ENCODE measurements at regions of chr12 and their contacts with region 1.

Region 1: DNA sequence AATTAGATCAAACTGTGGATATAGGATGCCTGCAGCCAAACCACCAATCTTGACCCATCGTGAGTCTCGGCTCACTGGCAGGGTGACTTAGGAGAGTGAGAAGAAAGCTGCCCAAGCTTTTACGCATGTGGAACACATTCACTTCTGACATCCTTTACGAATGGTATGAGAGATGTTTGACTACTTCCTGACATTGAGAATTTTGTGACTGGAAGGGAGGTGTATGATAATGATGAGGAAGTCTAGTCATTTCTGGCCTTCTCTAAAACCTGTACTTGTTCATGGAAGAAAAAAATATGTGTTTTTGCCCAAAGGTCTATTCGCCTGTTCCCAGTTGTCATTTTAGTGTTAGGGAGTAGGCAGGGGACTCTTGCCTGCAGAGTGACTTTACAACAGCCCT is 227.2 kb upstream of the ATP2B1 start:
- DNase-seq: no peak
- ATAC-seq: no peak
- H3K4me3 ChIP-seq: no peak overlapping the region
- H3K4me3 Mint-ChIP-seq: no peak overlapping the region
- H3K27ac ChIP-seq: no peak overlapping the region
- H3K27ac Mint-ChIP-seq: peak overlapping the region in 1 of 9 donors; percentile 64
- H3K4me1 ChIP-seq: no peaks in the 10 kb centered on the region
- H3K4me1 Mint-ChIP-seq: peaks cover 0 to 13% (median 4%) of the 10 kb centered on the region in 7 donors
- H3K27me3 ChIP-seq: no peaks in the 10 kb centered on the region
- H3K27me3 Mint-ChIP-seq: no peaks in the 10 kb centered on the region

Region 2: GRCh38 chr12:88006351-88006750 is 1929.5 kb before region 1 on chr12:
- CTCF ChIA-PET with region 1: no interaction called
- POLR2A ChIA-PET with region 1: no interaction called
- intact Hi-C with region 1: no loop called
- DNase-seq: no peak
- ATAC-seq: no peak
- H3K4me3 ChIP-seq: no peak overlapping the region
- H3K4me3 Mint-ChIP-seq: no peak overlapping the region
- H3K27ac ChIP-seq: no peak overlapping the region
- H3K27ac Mint-ChIP-seq: no peak overlapping the region
- H3K4me1 ChIP-seq: no peaks in the 10 kb centered on the region
- H3K4me1 Mint-ChIP-seq: no peaks in the 10 kb centered on the region
- H3K27me3 ChIP-seq: peaks cover 0 to 3% of the 10 kb centered on the region in 2 donors
- H3K27me3 Mint-ChIP-seq: peaks cover 2 to 17% (median 15%) of the 10 kb centered on the region in 5 donors

Region 3: GRCh38 chr12:89893972-89894706 is 41.7 kb before region 1 on chr12:
- CTCF ChIA-PET with region 1: no interaction called
- POLR2A ChIA-PET with region 1: no interaction called
- intact Hi-C with region 1: loop called in 1 of 2 experiments (anchors 2 kb)
- DNase-seq: no peak
- ATAC-seq: no peak
- H3K4me3 ChIP-seq: no peak overlapping the region
- H3K4me3 Mint-ChIP-seq: no peak overlapping the region
- H3K27ac ChIP-seq: no peak overlapping the region
- H3K27ac Mint-ChIP-seq: peak overlapping the region in 3 of 9 donors; percentile 11 to 66 (median 32)
- H3K4me1 ChIP-seq: peaks cover 0 to 5% of the 10 kb centered on the region in 2 donors
- H3K4me1 Mint-ChIP-seq: peaks cover 3 to 38% (median 25%) of the 10 kb centered on the region in 7 donors
- H3K27me3 ChIP-seq: no peaks in the 10 kb centered on the region
- H3K27me3 Mint-ChIP-seq: no peaks in the 10 kb centered on the region

Region 4: DNA sequence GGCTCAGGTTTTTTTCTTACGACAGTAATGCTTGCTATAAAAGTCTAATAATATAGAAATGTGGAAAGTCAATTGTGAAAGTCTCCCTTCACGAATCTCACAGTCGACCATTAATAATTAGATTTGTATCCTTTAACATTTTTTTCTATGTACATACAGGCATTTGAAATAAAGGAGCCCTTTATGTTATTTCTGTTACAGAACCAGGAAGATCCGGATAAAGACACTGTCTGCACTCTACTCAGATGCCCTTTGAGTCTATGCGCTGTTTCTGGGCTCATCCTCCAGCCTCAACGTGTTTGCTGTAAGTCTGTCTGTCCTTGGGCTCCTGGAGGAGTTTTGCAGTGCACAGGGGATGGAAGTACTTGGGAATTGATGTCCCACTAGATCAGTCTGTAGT is 15.0 kb before region 1 on chr12:
- CTCF ChIA-PET with region 1: no interaction called
- POLR2A ChIA-PET with region 1: no interaction called
- intact Hi-C with region 1: loop called in 1 of 2 experiments (anchors 2 kb)
- DNase-seq: no peak
- ATAC-seq: no peak
- H3K4me3 ChIP-seq: no peak overlapping the region
- H3K4me3 Mint-ChIP-seq: no peak overlapping the region
- H3K27ac ChIP-seq: no peak overlapping the region
- H3K27ac Mint-ChIP-seq: no peak overlapping the region
- H3K4me1 ChIP-seq: no peaks in the 10 kb centered on the region
- H3K4me1 Mint-ChIP-seq: peaks cover 0 to 6% (median 5%) of the 10 kb centered on the region in 7 donors
- H3K27me3 ChIP-seq: no peaks in the 10 kb centered on the region
- H3K27me3 Mint-ChIP-seq: peaks cover 0 to 2% (median 0%) of the 10 kb centered on the region in 5 donors

Region 5: GRCh38 chr12:90085494-90086274 is 149.9 kb after region 1 on chr12:
- CTCF ChIA-PET with region 1: no interaction called
- POLR2A ChIA-PET with region 1: no interaction called
- intact Hi-C with region 1: no loop called
- DNase-seq: no peak
- ATAC-seq: no peak
- H3K4me3 ChIP-seq: no peak overlapping the region
- H3K4me3 Mint-ChIP-seq: no peak overlapping the region
- H3K27ac ChIP-seq: no peak overlapping the region
- H3K27ac Mint-ChIP-seq: no peak overlapping the region
- H3K4me1 ChIP-seq: no peaks in the 10 kb centered on the region
- H3K4me1 Mint-ChIP-seq: peaks cover 0 to 7% (median 3%) of the 10 kb centered on the region in 7 donors
- H3K27me3 ChIP-seq: no peaks in the 10 kb centered on the region
- H3K27me3 Mint-ChIP-seq: no peaks in the 10 kb centered on the region